Right ventricle myocardium inferior (tissue), 1 donor: ENCODE measurements at regions of chr7 and their contacts with region 1.

Region 1: GRCh38 chr7:108181073-108181985 is 51.2 kb upstream of the LAMB4 start:
- DNase-seq: no peak
- ATAC-seq: no peak

Region 2: DNA sequence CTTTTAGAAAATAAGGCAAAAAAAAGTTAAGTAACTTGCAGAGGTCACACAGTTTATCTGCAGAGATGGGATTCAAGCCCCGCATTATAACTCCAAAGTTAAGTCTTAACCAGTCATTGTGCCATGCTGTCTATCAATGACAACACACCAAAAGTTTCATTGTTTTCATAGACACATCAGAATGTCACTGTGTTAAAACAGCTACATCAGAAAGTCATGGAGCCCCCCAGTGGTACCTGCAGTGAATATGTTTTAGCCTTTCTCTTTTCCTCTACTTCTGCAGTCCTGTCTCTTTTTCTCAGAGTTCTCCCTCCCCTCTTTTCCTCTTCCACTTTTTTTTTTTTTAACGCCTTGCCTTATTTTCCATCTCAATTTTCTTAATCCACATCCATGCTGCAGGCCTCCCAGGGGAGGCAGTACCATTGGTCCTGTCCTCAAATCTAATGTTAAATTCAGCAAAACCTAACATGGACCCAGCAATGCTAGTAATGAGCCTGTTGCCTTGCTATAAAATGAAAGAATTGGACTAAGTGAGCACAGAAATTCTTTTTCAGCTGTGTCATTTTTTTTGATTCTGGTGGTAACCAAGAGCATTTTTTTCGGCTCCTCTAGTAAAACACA is 278.7 kb after region 1 on chr7:
- intact Hi-C with region 1: loop called (anchors 2 kb)
- DNase-seq: no peak
- ATAC-seq: no peak

Region 3: DNA sequence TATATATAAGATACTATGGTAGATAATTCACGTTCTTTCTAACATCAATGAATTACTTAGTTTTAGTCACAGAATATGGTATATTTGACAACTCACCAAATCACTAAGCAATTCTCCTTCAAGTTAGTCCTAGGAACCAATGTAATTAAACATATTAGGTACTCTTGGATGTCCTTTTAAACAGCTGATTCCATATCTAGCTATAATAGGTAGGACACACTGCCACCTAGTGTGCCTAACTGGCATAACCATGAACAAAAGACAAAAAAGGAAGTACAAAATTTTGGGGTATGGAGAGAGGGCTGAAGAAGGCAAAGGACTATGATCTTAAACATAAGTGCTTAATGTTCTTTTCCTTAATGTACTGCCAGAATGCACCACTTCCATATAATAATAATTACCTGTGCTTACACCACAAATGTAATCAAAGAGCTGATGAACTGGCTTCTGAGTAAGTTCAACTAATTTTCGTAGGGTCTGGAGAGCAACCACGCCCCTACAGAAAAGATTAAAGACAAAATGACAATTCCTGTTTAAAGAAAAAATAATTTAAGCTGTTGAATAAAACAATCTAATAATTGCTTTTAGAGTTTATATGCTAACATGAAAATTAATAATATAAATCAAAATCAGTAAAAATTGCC is 315.9 kb after region 1 on chr7:
- intact Hi-C with region 1: loop called (anchors 2 kb)
- DNase-seq: no peak
- ATAC-seq: no peak